ENCODE measurements at regions of chr17 and their contacts with region 1.

Region 1: GRCh38 chr17:28252436-28252835 is 66.6 kb upstream of the TMEM97 start:
- DNase-seq: no peak
- ATAC-seq: no peak
- H3K4me3 ChIP-seq: no peak overlapping the region
- H3K27ac ChIP-seq: no peak overlapping the region
- H3K4me1 ChIP-seq: no peaks in the 10 kb centered on the region
- H3K27me3 ChIP-seq: no peaks in the 10 kb centered on the region

Region 2: DNA sequence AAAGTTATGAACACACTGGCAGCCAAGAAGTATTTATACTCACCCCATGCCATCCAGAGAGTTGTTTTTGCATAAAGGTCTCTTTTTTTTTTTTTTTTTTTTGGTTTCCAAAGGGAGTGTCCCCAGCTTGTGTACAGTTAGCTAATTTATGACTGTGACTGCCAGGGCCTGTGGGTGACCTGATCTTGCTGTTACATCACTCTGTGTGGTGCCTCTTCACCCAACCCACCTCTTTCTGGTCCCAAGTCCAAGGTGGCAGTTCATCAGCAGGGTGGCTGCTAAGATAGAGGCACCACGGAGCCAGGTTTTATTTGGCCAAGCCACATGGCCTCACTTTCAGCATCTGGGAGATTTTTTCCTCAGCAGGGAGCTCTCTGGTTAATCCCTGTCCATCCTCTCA is 451.9 kb before region 1 on chr17 and contains the start of gene NOS2:
- intact Hi-C with region 1: loop called in 3 of 4 experiments (anchors 5 to 10 kb)
- DNase-seq: no peak
- ATAC-seq: no peak
- H3K4me3 ChIP-seq: no peak within 1 kb of the TSS
- H3K27ac ChIP-seq: no peak within 1 kb of the TSS
- H3K4me1 ChIP-seq: no peaks in the 10 kb centered on the region
- H3K27me3 ChIP-seq: no peaks in the 10 kb centered on the region
- total RNA-seq, gene NOS2: 0.08 to 0.09 TPM in 2 of 4 donors, not detected in the others

Region 3: DNA sequence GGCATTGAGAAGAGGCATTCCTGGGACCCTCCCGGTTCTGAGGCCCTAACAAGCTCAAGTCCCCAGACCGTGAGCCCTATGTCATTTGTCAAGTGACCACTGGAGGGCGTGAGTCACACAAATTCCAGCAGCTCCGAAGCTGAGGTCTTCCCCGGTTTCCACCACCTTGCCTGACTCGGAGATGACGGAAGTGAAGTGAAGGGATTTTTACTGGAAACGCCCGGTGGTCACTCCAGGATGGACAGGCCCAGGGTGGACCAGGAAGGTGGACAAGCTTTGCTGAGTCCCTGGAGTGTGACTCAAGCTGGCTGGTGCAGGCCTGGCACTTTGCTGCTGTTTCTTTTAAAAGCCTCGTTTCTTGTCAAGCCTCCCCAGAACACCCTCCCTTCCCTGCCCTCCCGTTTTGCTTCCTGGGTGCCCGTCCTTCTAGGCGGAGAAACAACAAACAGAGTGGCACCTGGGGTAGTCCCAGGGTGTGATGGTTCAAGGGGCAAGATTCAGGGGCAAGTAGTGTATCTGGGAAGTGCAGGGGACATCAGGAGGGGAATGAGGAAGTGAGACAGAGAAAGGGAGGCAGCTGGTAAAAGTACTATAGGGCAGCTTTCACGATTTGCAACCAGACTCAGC is 446.8 kb before region 1 on chr17:
- intact Hi-C with region 1: loop called in 3 of 4 experiments (anchors 5 to 10 kb)
- DNase-seq: peak; percentile 81 to 88 (median 84)
- ATAC-seq: peak; percentile 90 to 95
- H3K4me3 ChIP-seq: peak overlapping the region; percentile 21
- H3K27ac ChIP-seq: no peak overlapping the region
- H3K4me1 ChIP-seq: peaks cover 2% of the 10 kb centered on the region
- H3K27me3 ChIP-seq: no peaks in the 10 kb centered on the region

Region 4: GRCh38 chr17:28357061-28357900 is 104.8 kb after region 1 on chr17 and contains the start of gene POLDIP2:
- intact Hi-C with region 1: no loop called
- DNase-seq: peak; percentile 95 to 99 (median 98)
- ATAC-seq: peak; percentile 99
- H3K4me3 ChIP-seq: peak within 1 kb of the TSS; percentile 92
- H3K27ac ChIP-seq: peak within 1 kb of the TSS; percentile 71
- H3K4me1 ChIP-seq: no peaks in the 10 kb centered on the region
- H3K27me3 ChIP-seq: no peaks in the 10 kb centered on the region
- total RNA-seq, gene POLDIP2: 97.1 to 99.8 (median 98.6) TPM

Measured in right cardiac atrium (tissue), 5 donors.